Activated CD4-positive, alpha-beta T cell treated with anti-CD3 and anti-CD28 coated beads, Interleukin-2, amount 10 ng/mL, durations not matched to agents 24 days and 14 days (primary cell): ENCODE measurements at regions of chr2 and their contacts with region 1.

Region 1: GRCh38 chr2:61538200-61538919 is at the start of gene XPO1:
- DNase-seq: peak; percentile 99
- H3K4me3 Mint-ChIP-seq: peak within 1 kb of the TSS; percentile 95
- H3K27ac Mint-ChIP-seq: peak within 1 kb of the TSS; percentile 100
- H3K4me1 Mint-ChIP-seq: peaks cover 35% of the 10 kb centered on the region
- H3K27me3 Mint-ChIP-seq: peaks cover 6% of the 10 kb centered on the region
- total RNA-seq, gene XPO1: 230 TPM in 2 replicates

Region 2: GRCh38 chr2:60881047-60881932 is 657.1 kb before region 1 on chr2 and contains the start of gene REL:
- intact Hi-C with region 1: loop called (anchors 1 kb)
- DNase-seq: peak; percentile 97
- H3K4me3 Mint-ChIP-seq: peak within 1 kb of the TSS; percentile 97
- H3K27ac Mint-ChIP-seq: peak within 1 kb of the TSS; percentile 97
- H3K4me1 Mint-ChIP-seq: peaks cover 21% of the 10 kb centered on the region
- H3K27me3 Mint-ChIP-seq: no peaks in the 10 kb centered on the region
- total RNA-seq, gene REL: 84.9 and 88.7 TPM in 2 replicates

Region 3: GRCh38 chr2:61176755-61177726 is 361.3 kb before region 1 on chr2:
- intact Hi-C with region 1: loop called (anchors 1 kb)
- DNase-seq: peak; percentile 99
- H3K4me3 Mint-ChIP-seq: peak overlapping the region; percentile 90
- H3K27ac Mint-ChIP-seq: peak overlapping the region; percentile 82
- H3K4me1 Mint-ChIP-seq: peaks cover 50% of the 10 kb centered on the region
- H3K27me3 Mint-ChIP-seq: peaks cover 9% of the 10 kb centered on the region

Region 4: GRCh38 chr2:61694312-61695274 is 156.2 kb after region 1 on chr2:
- intact Hi-C with region 1: loop called (anchors 2 kb)
- DNase-seq: peak; percentile 95
- H3K4me3 Mint-ChIP-seq: peak overlapping the region; percentile 92
- H3K27ac Mint-ChIP-seq: peak overlapping the region; percentile 93
- H3K4me1 Mint-ChIP-seq: peaks cover 15% of the 10 kb centered on the region
- H3K27me3 Mint-ChIP-seq: peaks cover 2% of the 10 kb centered on the region

Region 5: DNA sequence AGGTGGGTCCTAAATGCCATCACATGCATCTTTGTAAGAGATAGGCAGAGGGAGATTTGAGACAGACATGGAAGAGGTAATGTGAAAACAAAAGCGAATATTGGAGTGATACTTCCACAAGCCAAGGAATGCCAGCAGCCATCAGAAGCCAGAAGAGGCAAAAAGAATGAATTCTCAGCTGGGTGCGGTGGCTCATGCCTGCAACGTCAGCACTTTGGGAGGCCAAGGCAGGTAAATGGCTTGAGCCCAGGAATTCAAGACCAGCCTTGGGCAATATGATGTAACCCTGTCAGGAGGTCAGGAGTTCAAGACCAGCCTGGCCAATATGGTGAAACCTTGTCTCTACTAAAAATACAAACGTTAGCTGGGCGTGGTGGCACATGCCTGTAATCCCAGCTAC is 260.7 kb after region 1 on chr2:
- intact Hi-C with region 1: no loop called
- DNase-seq: no peak
- H3K4me3 Mint-ChIP-seq: no peak overlapping the region
- H3K27ac Mint-ChIP-seq: no peak overlapping the region
- H3K4me1 Mint-ChIP-seq: no peaks in the 10 kb centered on the region
- H3K27me3 Mint-ChIP-seq: peaks cover 10% of the 10 kb centered on the region

Region 6: GRCh38 chr2:61888267-61889055 is 350.1 kb after region 1 on chr2 and contains the start of gene CCT4:
- intact Hi-C with region 1: loop called (anchors 1 kb)
- DNase-seq: peak; percentile 97
- H3K4me3 Mint-ChIP-seq: peak within 1 kb of the TSS; percentile 99
- H3K27ac Mint-ChIP-seq: peak within 1 kb of the TSS; percentile 99
- H3K4me1 Mint-ChIP-seq: peaks cover 22% of the 10 kb centered on the region
- H3K27me3 Mint-ChIP-seq: no peaks in the 10 kb centered on the region
- total RNA-seq, gene CCT4: 398 and 407 TPM in 2 replicates